Heart right ventricle (tissue), 16 donors: ENCODE measurements at regions of chr17 and their contacts with region 1.

Region 1: DNA sequence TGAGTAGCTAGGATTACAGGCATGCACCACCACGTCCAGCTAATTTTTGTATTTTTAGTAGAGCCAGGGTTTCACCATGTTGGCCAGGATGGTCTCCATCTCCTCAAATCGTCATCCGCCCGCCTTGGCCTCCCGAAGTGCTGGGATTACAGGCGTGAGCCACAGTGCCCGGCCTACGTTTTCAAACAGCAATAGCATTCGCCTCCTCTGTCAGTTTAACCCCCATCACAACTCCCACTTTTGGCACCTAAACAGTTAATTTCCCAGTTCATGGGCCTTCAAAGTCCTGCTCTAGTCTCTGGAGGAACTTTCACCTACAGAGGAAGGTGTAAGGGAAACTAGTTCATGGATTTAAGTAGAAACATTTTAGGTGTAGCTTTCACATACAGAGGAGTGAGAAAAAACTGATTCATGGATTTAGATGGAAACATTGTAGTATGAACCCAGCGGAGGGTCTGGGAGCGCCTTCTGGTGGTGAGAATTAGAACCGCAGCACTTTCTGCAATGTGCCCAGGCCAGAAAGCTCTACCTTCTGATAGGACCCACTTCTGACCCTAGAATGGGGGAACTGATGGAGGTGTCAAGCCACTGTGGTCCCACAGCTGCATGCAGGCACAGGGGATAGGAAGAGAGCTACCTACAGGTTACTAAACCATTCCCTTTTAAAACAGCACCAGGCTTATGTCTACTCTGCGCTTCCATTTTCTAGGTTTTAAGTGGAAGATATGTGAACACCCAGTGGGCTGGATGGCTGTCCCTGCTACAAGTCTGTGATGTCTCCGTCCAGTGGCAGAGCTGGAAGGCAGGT is 12.0 kb upstream of the MEOX1 start:
- DNase-seq: peak; percentile 73 to 81
- ATAC-seq: peak; percentile 53 to 78 (median 66)
- H3K4me3 ChIP-seq: no peak overlapping the region
- H3K27ac ChIP-seq: peak overlapping the region in 2 of 10 donors; percentile 54 to 59
- H3K4me1 ChIP-seq: peaks cover 3 to 43% (median 20%) of the 10 kb centered on the region in 9 donors
- H3K27me3 ChIP-seq: no peaks in the 10 kb centered on the region
- CTCF ChIP-seq: peak; percentile 91 to 99 (median 96)

Region 2: GRCh38 chr17:43062984-43063638 is 610.6 kb before region 1 on chr17:
- intact Hi-C with region 1: no loop called
- DNase-seq: no peak
- ATAC-seq: no peak
- H3K4me3 ChIP-seq: no peak overlapping the region
- H3K27ac ChIP-seq: no peak overlapping the region
- H3K4me1 ChIP-seq: peaks cover 0 to 2% (median 0%) of the 10 kb centered on the region in 9 donors
- H3K27me3 ChIP-seq: no peaks in the 10 kb centered on the region
- CTCF ChIP-seq: no peak

Region 3: DNA sequence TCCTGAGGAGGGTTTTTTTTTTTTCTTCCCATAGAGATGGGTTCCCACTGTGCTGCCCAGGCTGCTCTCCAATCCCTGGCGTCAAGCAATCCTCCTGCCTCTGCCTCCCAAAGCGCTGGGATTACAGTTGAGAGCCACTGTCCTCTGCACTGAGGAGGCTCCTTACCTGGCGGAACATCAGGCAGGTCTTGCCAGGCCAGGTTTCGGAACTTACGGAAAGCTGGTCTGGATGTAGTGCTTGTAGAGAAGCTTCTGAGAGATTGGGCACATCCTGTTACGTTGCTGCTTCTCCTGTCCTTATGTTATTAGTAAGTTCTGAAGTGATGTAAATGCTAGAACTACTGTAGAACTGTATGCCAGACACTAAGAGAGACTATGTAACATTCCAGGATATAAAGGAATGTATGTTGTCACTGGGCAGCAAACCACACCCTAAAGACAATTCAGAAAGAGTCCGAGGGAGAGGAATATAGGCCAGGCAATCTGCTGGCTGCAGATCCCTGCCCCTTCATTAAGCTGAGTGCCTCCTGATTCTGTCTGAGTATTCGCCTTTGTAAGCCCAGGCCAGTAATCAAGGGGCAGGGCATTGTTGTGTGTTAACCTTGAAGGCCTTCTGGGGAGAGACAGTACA is 148.7 kb before region 1 on chr17:
- intact Hi-C with region 1: loop called in 1 of 10 experiments (anchors 5 kb)
- DNase-seq: no peak
- ATAC-seq: no peak
- H3K4me3 ChIP-seq: no peak overlapping the region
- H3K27ac ChIP-seq: peak overlapping the region in 4 of 10 donors; percentile 20 to 53 (median 36)
- H3K4me1 ChIP-seq: peaks cover 0 to 30% (median 27%) of the 10 kb centered on the region in 9 donors
- H3K27me3 ChIP-seq: no peaks in the 10 kb centered on the region
- CTCF ChIP-seq: no peak